Activated T-helper 2 cell treated with anti-CD3 and anti-CD28 coated beads, Interferon-gamma antibody, Interleukin-2, Interleukin-4, amounts not matched to agents 10 μg/mL and 5 μg/mL and 100 μg/mL, durations not matched to agents 14 hours and 24 hours and 36 hours (primary cell): ENCODE measurements at regions of chr9 and their contacts with region 1.

Region 1: GRCh38 chr9:105713260-105714019 is 19.1 kb downstream of the TMEM38B start:
- DNase-seq: no peak
- H3K4me3 Mint-ChIP-seq: no peak overlapping the region
- H3K27ac Mint-ChIP-seq: no peak overlapping the region
- H3K4me1 Mint-ChIP-seq: peaks cover 3% of the 10 kb centered on the region
- H3K27me3 Mint-ChIP-seq: no peaks in the 10 kb centered on the region

Region 2: DNA sequence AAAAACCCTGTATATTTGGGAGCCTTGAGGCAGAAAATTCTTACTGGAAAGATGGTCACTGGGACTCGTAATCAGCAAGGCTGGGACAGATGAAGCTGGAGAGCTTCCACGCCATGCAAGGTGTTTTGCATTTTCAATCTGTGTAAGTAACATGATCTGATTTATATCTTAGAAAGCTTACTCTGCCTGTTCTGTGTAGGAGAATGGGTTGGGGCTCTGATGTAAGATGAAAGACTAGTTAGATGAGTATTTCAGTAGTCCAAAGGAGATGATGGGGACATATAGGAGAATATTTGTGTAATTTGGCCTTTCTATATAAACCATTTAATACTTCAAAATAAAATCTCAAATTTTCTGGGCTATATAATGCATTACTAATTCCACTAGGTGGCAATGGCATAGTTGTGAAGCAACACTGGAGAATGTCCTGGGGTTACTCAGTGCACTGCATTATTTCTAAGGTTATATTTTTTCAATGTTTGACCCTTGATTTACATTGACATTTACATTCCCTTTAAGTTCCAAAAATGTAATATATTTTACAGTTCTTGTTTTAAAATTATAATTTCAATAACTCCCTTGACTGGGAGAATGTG is 287.5 kb before region 1 on chr9:
- intact Hi-C with region 1: loop called (anchors 5 kb)
- DNase-seq: no peak
- H3K4me3 Mint-ChIP-seq: no peak overlapping the region
- H3K27ac Mint-ChIP-seq: no peak overlapping the region
- H3K4me1 Mint-ChIP-seq: peaks cover 2% of the 10 kb centered on the region
- H3K27me3 Mint-ChIP-seq: peaks cover 10% of the 10 kb centered on the region

Region 3: GRCh38 chr9:105608721-105609598 is 104.5 kb before region 1 on chr9:
- intact Hi-C with region 1: loop called (anchors 1 kb)
- DNase-seq: no peak
- H3K4me3 Mint-ChIP-seq: no peak overlapping the region
- H3K27ac Mint-ChIP-seq: no peak overlapping the region
- H3K4me1 Mint-ChIP-seq: no peaks in the 10 kb centered on the region
- H3K27me3 Mint-ChIP-seq: no peaks in the 10 kb centered on the region

Region 4: GRCh38 chr9:105656131-105656921 is 57.1 kb before region 1 on chr9:
- intact Hi-C with region 1: loop called (anchors 2 kb)
- DNase-seq: no peak
- H3K4me3 Mint-ChIP-seq: peak overlapping the region; percentile 51
- H3K27ac Mint-ChIP-seq: no peak overlapping the region
- H3K4me1 Mint-ChIP-seq: peaks cover 5% of the 10 kb centered on the region
- H3K27me3 Mint-ChIP-seq: peaks cover 36% of the 10 kb centered on the region